HepG2 (cell line): ENCODE measurements at regions of chr14 and their contacts with region 1.

Region 1: DNA sequence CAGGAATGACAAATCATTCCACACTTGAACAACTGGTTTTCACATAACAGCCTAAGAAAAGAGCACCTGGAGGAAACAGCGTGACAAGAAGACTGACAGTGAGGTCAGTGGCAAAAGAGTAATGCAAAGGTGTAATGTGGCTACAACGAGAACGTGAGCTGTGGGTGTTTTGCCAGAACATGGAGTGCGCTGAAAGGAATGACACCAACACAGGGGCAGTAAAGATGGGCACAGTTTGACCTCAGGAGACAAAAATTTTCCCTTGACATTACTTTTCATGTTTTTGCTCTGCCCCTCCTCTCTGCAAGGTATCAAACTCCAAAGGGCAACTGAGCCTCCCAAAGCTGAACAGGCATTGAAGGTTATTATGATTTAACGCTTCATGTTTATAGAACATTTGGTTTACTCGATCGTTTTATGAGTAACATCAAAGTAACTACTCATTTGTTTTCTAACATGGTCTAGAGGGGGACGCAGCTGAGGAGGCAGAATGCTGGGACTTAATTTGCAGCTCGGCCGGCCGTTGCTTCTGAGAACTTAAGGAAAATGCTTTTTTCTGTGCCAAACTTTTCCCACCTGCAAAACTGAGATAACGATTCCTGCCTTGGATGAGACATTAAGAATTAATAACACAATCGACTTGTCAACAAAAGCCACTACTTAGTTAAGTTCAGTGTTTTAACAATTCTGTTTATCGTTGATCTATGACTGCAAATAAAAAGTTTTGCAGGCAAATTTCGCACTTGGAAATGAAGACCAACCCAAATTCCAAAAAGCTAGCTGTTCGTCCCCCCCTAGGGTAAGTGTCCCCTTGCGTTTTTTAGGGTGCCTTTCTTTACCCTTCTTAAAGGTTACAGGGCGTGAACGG is 954 bp downstream of the HAUS4 start:
- DNase-seq: peak; percentile 48
- ATAC-seq: peak; percentile 27
- H3K4me3 ChIP-seq: peak overlapping the region; percentile 73 to 78 (median 77)
- H3K27ac ChIP-seq: peak overlapping the region; percentile 78
- H3K4me1 ChIP-seq: peaks cover 47% of the 10 kb centered on the region
- H3K27me3 ChIP-seq: no peaks in the 10 kb centered on the region; a peak in 1 of 5 replicates
- CTCF ChIP-seq: no peak
- EP300 ChIP-seq: peak in 1 of 2 experiments; percentile 25; a peak in 1 of 4 replicates
- POLR2A ChIP-seq: no peak
- RAD21 ChIP-seq: no peak

Region 2: GRCh38 chr14:22163051-22163450 is 792.9 kb before region 1 on chr14:
- CTCF ChIA-PET with region 1: no interaction called
- POLR2A ChIA-PET with region 1: no interaction called
- in situ Hi-C with region 1: no loop called
- intact Hi-C with region 1: no loop called
- DNase-seq: peak; percentile 43
- ATAC-seq: peak; percentile 72
- H3K4me3 ChIP-seq: no peak overlapping the region
- H3K27ac ChIP-seq: no peak overlapping the region
- H3K4me1 ChIP-seq: no peaks in the 10 kb centered on the region
- H3K27me3 ChIP-seq: no peaks in the 10 kb centered on the region
- CTCF ChIP-seq: peak; percentile 57
- EP300 ChIP-seq: no peak
- POLR2A ChIP-seq: no peak
- RAD21 ChIP-seq: no peak

Region 3: GRCh38 chr14:22918804-22919600 is 36.9 kb before region 1 on chr14 and contains the start of gene RBM23:
- CTCF ChIA-PET with region 1: no interaction called
- POLR2A ChIA-PET with region 1: interaction called, 11 read pairs
- in situ Hi-C with region 1: no loop called
- intact Hi-C with region 1: no loop called
- DNase-seq: peak; percentile 36
- ATAC-seq: no peak
- H3K4me3 ChIP-seq: no peak within 1 kb of the TSS
- H3K27ac ChIP-seq: no peak within 1 kb of the TSS
- H3K4me1 ChIP-seq: peaks cover 33% of the 10 kb centered on the region
- H3K27me3 ChIP-seq: no peaks in the 10 kb centered on the region
- CTCF ChIP-seq: no peak
- EP300 ChIP-seq: no peak
- POLR2A ChIP-seq: no peak
- RAD21 ChIP-seq: no peak
- total RNA-seq, gene RBM23: 0.52 and 1.5 TPM in 2 replicates

Region 4: GRCh38 chr14:22939684-22940083 is 16.3 kb before region 1 on chr14:
- CTCF ChIA-PET with region 1: no interaction called
- POLR2A ChIA-PET with region 1: interaction called, 10 read pairs
- in situ Hi-C with region 1: no loop called
- intact Hi-C with region 1: loop called (anchors 2 kb)
- DNase-seq: no peak
- ATAC-seq: no peak
- H3K4me3 ChIP-seq: no peak overlapping the region
- H3K27ac ChIP-seq: no peak overlapping the region
- H3K4me1 ChIP-seq: no peaks in the 10 kb centered on the region
- H3K27me3 ChIP-seq: no peaks in the 10 kb centered on the region
- CTCF ChIP-seq: no peak
- EP300 ChIP-seq: no peak
- POLR2A ChIP-seq: no peak
- RAD21 ChIP-seq: no peak